CD8-positive, alpha-beta T cell (primary cell): ENCODE measurements at regions of chr6 and their contacts with region 1.

Region 1: GRCh38 chr6:142566628-142567396 is 265.0 kb downstream of the ADGRG6 start:
- DNase-seq: peak; percentile 22 to 72 (median 58)
- ATAC-seq: peak; percentile 57
- H3K4me3 ChIP-seq: no peak overlapping the region
- H3K4me3 Mint-ChIP-seq: no peak overlapping the region
- H3K27ac ChIP-seq: no peak overlapping the region
- H3K27ac Mint-ChIP-seq: no peak overlapping the region
- H3K4me1 ChIP-seq: peaks cover 47% of the 10 kb centered on the region
- H3K4me1 Mint-ChIP-seq: peaks cover 61% of the 10 kb centered on the region
- H3K27me3 ChIP-seq: no peaks in the 10 kb centered on the region
- H3K27me3 Mint-ChIP-seq: no peaks in the 10 kb centered on the region
- CTCF ChIP-seq: peak; percentile 75

Region 2: DNA sequence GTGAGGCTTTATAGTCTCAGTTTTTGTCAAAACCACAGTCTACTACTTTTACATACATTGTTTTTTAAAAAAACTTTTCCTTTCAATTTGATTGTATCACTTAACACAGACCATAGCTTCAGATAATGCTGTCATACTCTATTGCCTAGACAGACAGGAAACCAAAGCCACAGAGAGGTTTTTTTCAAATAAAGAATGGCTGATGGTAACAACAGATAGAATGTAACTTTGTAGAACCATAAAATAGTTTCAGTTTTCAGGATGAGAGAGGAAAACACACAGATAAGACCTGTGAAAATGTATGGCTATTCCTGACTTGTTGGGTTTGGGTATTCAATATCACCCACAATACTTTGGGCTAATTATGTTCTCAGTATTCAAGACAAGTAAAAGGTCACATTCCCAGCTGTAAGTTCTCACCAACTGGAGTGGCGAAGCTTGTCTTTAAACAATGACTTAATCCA is 171.0 kb before region 1 on chr6:
- CTCF ChIA-PET with region 1: no interaction called
- POLR2A ChIA-PET with region 1: no interaction called
- intact Hi-C with region 1: loop called in 1 of 2 experiments (anchors 5 kb)
- DNase-seq: peak in 2 of 9 experiments; percentile 68 to 82
- ATAC-seq: peak; percentile 87
- H3K4me3 ChIP-seq: no peak overlapping the region
- H3K4me3 Mint-ChIP-seq: peak overlapping the region; percentile 54
- H3K27ac ChIP-seq: peak overlapping the region; percentile 13 to 42
- H3K27ac Mint-ChIP-seq: peak overlapping the region; percentile 85
- H3K4me1 ChIP-seq: peaks cover 38% of the 10 kb centered on the region
- H3K4me1 Mint-ChIP-seq: peaks cover 50% of the 10 kb centered on the region
- H3K27me3 ChIP-seq: no peaks in the 10 kb centered on the region
- H3K27me3 Mint-ChIP-seq: no peaks in the 10 kb centered on the region
- CTCF ChIP-seq: no peak

Region 3: GRCh38 chr6:142551274-142551811 is 15.5 kb before region 1 on chr6:
- CTCF ChIA-PET with region 1: interaction called, 23 read pairs
- POLR2A ChIA-PET with region 1: interaction called, 3 read pairs
- intact Hi-C with region 1: loop called in 1 of 2 experiments (anchors 2 kb)
- DNase-seq: peak; percentile 1 to 70 (median 41)
- ATAC-seq: peak; percentile 99
- H3K4me3 ChIP-seq: no peak overlapping the region
- H3K4me3 Mint-ChIP-seq: peak overlapping the region; percentile 0
- H3K27ac ChIP-seq: no peak overlapping the region
- H3K27ac Mint-ChIP-seq: no peak overlapping the region
- H3K4me1 ChIP-seq: peaks cover 29% of the 10 kb centered on the region
- H3K4me1 Mint-ChIP-seq: peaks cover 26% of the 10 kb centered on the region
- H3K27me3 ChIP-seq: no peaks in the 10 kb centered on the region
- H3K27me3 Mint-ChIP-seq: peaks cover 3% of the 10 kb centered on the region
- CTCF ChIP-seq: no peak